ENCODE measurements at regions of chr2 and their contacts with region 1.

Region 1: DNA sequence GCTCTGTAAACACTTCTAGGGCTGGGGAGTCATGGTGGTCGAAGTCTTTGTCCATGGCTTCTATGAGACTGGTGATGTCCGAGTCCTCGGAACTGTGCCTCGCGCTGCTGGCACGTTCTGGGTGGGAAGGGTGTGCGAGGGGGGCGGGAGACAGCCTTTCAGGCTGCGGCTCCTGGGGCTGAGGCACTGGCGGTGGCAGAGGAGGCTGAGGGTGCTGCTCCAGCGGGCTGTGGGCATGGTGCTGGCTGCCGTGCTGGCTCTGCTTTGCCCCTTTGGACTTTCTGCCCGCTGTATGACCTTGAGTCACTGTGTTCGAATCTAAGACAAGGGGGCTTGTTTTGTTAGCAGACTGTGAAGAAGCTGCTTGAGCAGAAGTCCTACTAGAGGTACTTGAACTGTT is 79.0 kb downstream of the ZAP70 start:
- DNase-seq: no peak
- ATAC-seq: no peak

Region 2: GRCh38 chr2:97740590-97741182 is 51.7 kb before region 1 on chr2:
- intact Hi-C with region 1: loop called in 1 of 2 experiments (anchors 5 kb)
- DNase-seq: no peak
- ATAC-seq: peak in 1 of 2 donors; percentile 16

Measured in left cardiac atrium (tissue), 4 donors.